ENCODE measurements at regions of chrX and their contacts with region 1.

Region 1: GRCh38 chrX:110734894-110735541 is 60.6 kb downstream of the CHRDL1 start:
- DNase-seq: peak; percentile 11 to 92
- H3K4me3 ChIP-seq: no peak overlapping the region
- H3K27ac ChIP-seq: peak overlapping the region; percentile 25; the same call in 1 of the 2 replicates
- H3K4me1 ChIP-seq: peaks cover 30% of the 10 kb centered on the region
- H3K27me3 ChIP-seq: no peaks in the 10 kb centered on the region
- CTCF ChIP-seq: no peak

Region 2: GRCh38 chrX:110759785-110760184 is 24.8 kb after region 1 on chrX:
- CTCF ChIA-PET with region 1: no interaction called
- POLR2A ChIA-PET with region 1: no interaction called
- intact Hi-C with region 1: loop called (anchors 2 kb)
- DNase-seq: no peak
- H3K4me3 ChIP-seq: no peak overlapping the region
- H3K27ac ChIP-seq: no peak overlapping the region
- H3K4me1 ChIP-seq: peaks cover 18% of the 10 kb centered on the region
- H3K27me3 ChIP-seq: no peaks in the 10 kb centered on the region
- CTCF ChIP-seq: no peak

Region 3: DNA sequence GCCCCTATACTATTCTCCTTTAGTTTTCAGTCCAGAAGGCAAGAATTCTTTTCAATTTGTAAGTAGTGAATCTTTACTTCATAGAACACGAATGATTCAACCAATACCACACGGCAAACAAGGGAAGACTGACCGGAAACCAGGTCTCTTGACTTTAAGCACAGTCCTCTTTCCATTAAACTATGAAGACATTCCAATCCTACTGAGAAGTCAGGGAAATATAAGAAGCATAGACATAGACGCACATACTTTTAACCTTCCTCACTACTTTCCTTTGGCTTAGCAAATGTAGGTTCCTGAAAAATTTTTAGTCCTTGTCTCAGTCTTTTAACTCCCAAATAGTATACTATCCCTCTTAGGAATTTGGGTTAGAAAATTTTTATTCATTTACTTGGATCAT is 51.5 kb after region 1 on chrX:
- CTCF ChIA-PET with region 1: interaction called, 15 read pairs
- POLR2A ChIA-PET with region 1: no interaction called
- intact Hi-C with region 1: no loop called
- DNase-seq: peak in 1 of 2 experiments; percentile 11
- H3K4me3 ChIP-seq: no peak overlapping the region
- H3K27ac ChIP-seq: no peak overlapping the region
- H3K4me1 ChIP-seq: no peaks in the 10 kb centered on the region
- H3K27me3 ChIP-seq: no peaks in the 10 kb centered on the region
- CTCF ChIP-seq: no peak

Region 4: DNA sequence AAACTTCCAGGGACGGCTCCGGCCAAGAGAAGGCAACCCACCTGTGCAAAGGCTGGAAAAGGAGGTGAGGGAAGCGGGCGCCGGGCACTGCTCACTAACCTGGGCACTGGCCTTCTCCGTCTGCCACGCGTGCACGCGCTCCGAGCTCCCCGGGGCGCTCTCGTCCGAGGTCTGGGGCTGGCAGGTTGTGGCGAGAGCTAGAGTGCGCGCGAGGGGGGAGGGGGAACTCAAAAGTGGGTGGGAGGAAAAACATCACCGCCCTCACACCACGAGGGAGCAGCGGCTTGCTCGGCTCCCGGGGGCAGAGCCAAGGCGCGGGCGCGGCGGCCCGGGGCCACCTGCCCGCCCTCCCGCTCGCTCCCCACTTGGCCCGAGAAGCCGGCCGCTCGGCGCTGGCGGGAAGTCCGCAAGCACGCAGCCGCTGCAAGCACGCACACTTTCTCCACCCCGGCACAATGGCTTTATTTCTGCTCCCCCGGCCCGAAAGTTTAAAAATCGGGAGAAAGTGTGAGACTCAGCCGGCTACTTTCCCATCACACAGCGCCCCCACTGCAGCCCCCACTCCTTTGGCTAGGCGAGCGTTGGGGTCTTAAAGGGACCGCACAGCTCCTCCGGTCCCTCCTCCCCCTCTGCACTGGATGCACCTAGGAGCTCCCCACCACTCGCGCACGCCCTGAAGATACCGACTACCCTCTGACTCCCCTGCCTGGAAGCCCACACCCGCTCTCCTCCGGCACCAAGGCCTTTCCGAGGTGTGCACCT is 60.8 kb after region 1 on chrX and contains the start of gene CHRDL1:
- CTCF ChIA-PET with region 1: no interaction called
- POLR2A ChIA-PET with region 1: no interaction called
- intact Hi-C with region 1: loop called (anchors 2 kb)
- DNase-seq: peak in 1 of 2 experiments; percentile 77
- H3K4me3 ChIP-seq: peak within 1 kb of the TSS; percentile 63
- H3K27ac ChIP-seq: no peak within 1 kb of the TSS
- H3K4me1 ChIP-seq: peaks cover 5% of the 10 kb centered on the region; the same call in 1 of the 2 replicates
- H3K27me3 ChIP-seq: no peaks in the 10 kb centered on the region
- CTCF ChIP-seq: no peak
- total RNA-seq, gene CHRDL1: 18.8 and 25.7 TPM in 2 replicates

Region 5: DNA sequence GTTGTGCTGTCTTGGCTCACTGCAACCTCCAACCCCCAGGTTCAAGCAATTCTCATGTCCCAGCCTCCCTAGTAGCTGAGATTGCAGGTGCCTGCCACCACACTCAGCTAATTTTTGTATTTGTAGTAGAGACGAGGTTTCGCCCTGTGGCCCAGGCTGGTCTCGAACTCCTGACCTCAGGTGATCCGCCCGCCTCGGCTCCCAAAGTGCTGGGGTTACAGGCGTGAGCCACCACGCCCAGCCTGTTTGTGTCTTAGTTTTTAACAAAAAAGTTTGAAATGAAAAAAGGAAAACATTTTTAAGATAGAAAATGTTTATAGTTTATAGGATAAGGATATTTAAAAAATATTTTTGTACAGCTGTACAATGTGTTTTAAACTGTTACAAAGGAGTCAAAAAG is 472.8 kb after region 1 on chrX:
- CTCF ChIA-PET with region 1: no interaction called
- POLR2A ChIA-PET with region 1: no interaction called
- intact Hi-C with region 1: no loop called
- DNase-seq: no peak
- H3K4me3 ChIP-seq: no peak overlapping the region
- H3K27ac ChIP-seq: no peak overlapping the region
- H3K4me1 ChIP-seq: no peaks in the 10 kb centered on the region
- H3K27me3 ChIP-seq: peaks cover 5% of the 10 kb centered on the region; the same call in 1 of the 2 replicates
- CTCF ChIP-seq: no peak

Measured in PC-9 (cell line).